Activated naive CD4-positive, alpha-beta T cell treated with anti-CD3 and anti-CD28 coated beads for 36 hours (primary cell): ENCODE measurements at regions of chr12 and their contacts with region 1.

Region 1: GRCh38 chr12:64796208-64796845 is 28.1 kb upstream of the TBC1D30 start:
- DNase-seq: peak; percentile 76
- H3K4me3 Mint-ChIP-seq: no peak overlapping the region
- H3K27ac Mint-ChIP-seq: no peak overlapping the region
- H3K4me1 Mint-ChIP-seq: no peaks in the 10 kb centered on the region
- H3K27me3 Mint-ChIP-seq: peaks cover 6% of the 10 kb centered on the region

Region 2: GRCh38 chr12:64491718-64492117 is 304.6 kb before region 1 on chr12:
- CTCF ChIA-PET with region 1: no interaction called
- intact Hi-C with region 1: no loop called
- DNase-seq: no peak
- H3K4me3 Mint-ChIP-seq: no peak overlapping the region
- H3K27ac Mint-ChIP-seq: no peak overlapping the region
- H3K4me1 Mint-ChIP-seq: peaks cover 16% of the 10 kb centered on the region
- H3K27me3 Mint-ChIP-seq: no peaks in the 10 kb centered on the region

Region 3: GRCh38 chr12:64550755-64551154 is 245.6 kb before region 1 on chr12:
- CTCF ChIA-PET with region 1: interaction called, 9 read pairs
- intact Hi-C with region 1: loop called (anchors 2 kb)
- DNase-seq: no peak
- H3K4me3 Mint-ChIP-seq: no peak overlapping the region
- H3K27ac Mint-ChIP-seq: no peak overlapping the region
- H3K4me1 Mint-ChIP-seq: peaks cover 7% of the 10 kb centered on the region
- H3K27me3 Mint-ChIP-seq: no peaks in the 10 kb centered on the region

Region 4: GRCh38 chr12:64785838-64786237 is 10.5 kb before region 1 on chr12:
- CTCF ChIA-PET with region 1: interaction called, 22 read pairs
- intact Hi-C with region 1: no loop called
- DNase-seq: no peak
- H3K4me3 Mint-ChIP-seq: no peak overlapping the region
- H3K27ac Mint-ChIP-seq: no peak overlapping the region
- H3K4me1 Mint-ChIP-seq: peaks cover 12% of the 10 kb centered on the region
- H3K27me3 Mint-ChIP-seq: peaks cover 34% of the 10 kb centered on the region

Region 5: DNA sequence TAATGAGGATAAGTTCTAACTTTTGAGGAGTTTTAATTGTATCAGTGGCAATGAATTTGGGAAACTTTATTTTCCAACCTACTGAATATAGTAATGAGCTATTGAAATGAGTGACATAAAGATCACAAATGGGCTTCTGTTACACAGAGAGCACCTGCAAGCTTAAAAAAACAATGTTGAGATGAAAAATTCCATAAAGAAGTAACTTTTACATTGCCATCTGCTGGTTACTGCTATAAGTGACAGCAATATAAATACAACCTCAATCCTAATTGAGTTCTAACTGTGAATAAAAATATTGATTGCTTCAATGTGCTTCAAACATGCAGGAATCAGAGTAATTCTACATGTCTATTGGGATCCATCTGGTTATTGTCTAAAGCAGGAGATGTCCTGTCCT is 310.6 kb after region 1 on chr12:
- CTCF ChIA-PET with region 1: interaction called, 3 read pairs
- intact Hi-C with region 1: loop called (anchors 2 kb)
- DNase-seq: no peak
- H3K4me3 Mint-ChIP-seq: no peak overlapping the region
- H3K27ac Mint-ChIP-seq: no peak overlapping the region
- H3K4me1 Mint-ChIP-seq: no peaks in the 10 kb centered on the region
- H3K27me3 Mint-ChIP-seq: peaks cover 2% of the 10 kb centered on the region

Region 6: GRCh38 chr12:66087365-66087943 is 1291.1 kb after region 1 on chr12:
- CTCF ChIA-PET with region 1: no interaction called
- intact Hi-C with region 1: loop called (anchors 2 kb)
- DNase-seq: peak; percentile 81
- H3K4me3 Mint-ChIP-seq: no peak overlapping the region
- H3K27ac Mint-ChIP-seq: no peak overlapping the region
- H3K4me1 Mint-ChIP-seq: no peaks in the 10 kb centered on the region
- H3K27me3 Mint-ChIP-seq: peaks cover 12% of the 10 kb centered on the region